Activated T-helper 2 cell treated with anti-CD3 and anti-CD28 coated beads, Interferon-gamma antibody, Interleukin-2, Interleukin-4, amounts not matched to agents 10 μg/mL and 5 μg/mL and 100 μg/mL, durations not matched to agents 14 hours and 24 hours and 36 hours (primary cell): ENCODE measurements at regions of chr11 and their contacts with region 1.

Region 1: DNA sequence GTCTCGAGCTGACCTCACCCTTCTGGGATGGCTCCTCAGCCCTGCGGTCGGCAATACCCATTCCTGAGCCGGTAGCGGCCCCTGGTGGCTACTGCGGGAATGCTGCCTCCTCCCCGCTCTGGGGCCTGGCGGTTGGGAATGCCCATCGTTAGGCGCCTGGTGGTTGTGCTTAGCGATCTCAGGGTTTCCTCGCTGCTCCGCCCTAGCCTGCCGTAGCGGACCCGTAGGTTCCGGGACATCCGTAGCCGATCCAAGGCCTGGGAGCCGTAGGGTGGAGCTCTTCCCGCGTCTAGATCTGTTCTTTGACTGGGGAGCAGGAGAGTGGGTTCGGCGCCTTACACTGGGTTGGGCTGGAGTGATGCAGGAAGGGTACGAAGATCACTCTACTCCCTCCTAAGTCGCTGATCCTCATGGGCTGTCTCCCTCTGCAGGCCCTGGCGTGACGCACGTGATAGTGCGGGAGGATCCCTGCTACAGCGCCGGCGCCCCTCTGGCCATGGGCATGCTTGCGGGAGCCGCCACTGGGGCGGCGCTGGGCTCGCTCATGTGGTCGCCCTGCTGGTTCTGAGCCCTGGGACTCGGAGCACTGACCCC is 14.8 kb downstream of the PLEKHB1 start:
- DNase-seq: peak; percentile 73
- H3K4me3 Mint-ChIP-seq: peak overlapping the region; percentile 38
- H3K27ac Mint-ChIP-seq: no peak overlapping the region
- H3K4me1 Mint-ChIP-seq: peaks cover 11% of the 10 kb centered on the region
- H3K27me3 Mint-ChIP-seq: no peaks in the 10 kb centered on the region

Region 2: GRCh38 chr11:73350908-73351636 is 310.1 kb before region 1 on chr11:
- intact Hi-C with region 1: loop called (anchors 1 kb)
- DNase-seq: peak; percentile 60
- H3K4me3 Mint-ChIP-seq: no peak overlapping the region
- H3K27ac Mint-ChIP-seq: no peak overlapping the region
- H3K4me1 Mint-ChIP-seq: peaks cover 35% of the 10 kb centered on the region
- H3K27me3 Mint-ChIP-seq: peaks cover 4% of the 10 kb centered on the region

Region 3: DNA sequence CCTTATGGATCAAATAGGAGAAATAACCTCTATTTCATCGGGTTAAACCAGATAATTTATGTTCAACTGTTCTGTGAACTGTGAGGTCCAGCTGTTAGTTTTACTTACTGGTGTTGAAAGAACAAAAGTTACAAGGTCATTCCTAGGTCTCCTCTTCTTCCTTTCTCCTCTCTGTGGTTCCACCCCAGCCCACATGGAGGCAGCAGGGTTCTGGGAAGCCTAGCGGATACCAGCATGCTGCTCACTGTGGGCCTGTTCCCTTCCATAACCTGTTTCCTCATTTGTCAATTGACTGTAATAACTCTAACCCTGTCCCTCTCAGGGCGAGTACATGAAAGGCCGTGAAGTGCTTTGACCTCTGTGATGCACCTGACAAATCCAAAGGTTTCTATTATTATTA is 257.1 kb before region 1 on chr11:
- intact Hi-C with region 1: loop called (anchors 10 kb)
- DNase-seq: no peak
- H3K4me3 Mint-ChIP-seq: no peak overlapping the region
- H3K27ac Mint-ChIP-seq: no peak overlapping the region
- H3K4me1 Mint-ChIP-seq: peaks cover 3% of the 10 kb centered on the region
- H3K27me3 Mint-ChIP-seq: no peaks in the 10 kb centered on the region

Region 4: GRCh38 chr11:73625696-73626318 is 35.3 kb before region 1 on chr11:
- intact Hi-C with region 1: loop called (anchors 1 kb)
- DNase-seq: peak; percentile 42
- H3K4me3 Mint-ChIP-seq: no peak overlapping the region
- H3K27ac Mint-ChIP-seq: no peak overlapping the region
- H3K4me1 Mint-ChIP-seq: no peaks in the 10 kb centered on the region
- H3K27me3 Mint-ChIP-seq: peaks cover 26% of the 10 kb centered on the region